ENCODE measurements at regions of chr14 and their contacts with region 1.

Region 1: GRCh38 chr14:88792572-88793258 is at the start of gene EML5:
- DNase-seq: peak; percentile 90
- ATAC-seq: peak; percentile 76
- H3K4me3 Mint-ChIP-seq: peak within 1 kb of the TSS; percentile 87
- H3K27ac Mint-ChIP-seq: peak within 1 kb of the TSS; percentile 87
- H3K4me1 Mint-ChIP-seq: peaks cover 26% of the 10 kb centered on the region
- H3K27me3 Mint-ChIP-seq: no peaks in the 10 kb centered on the region
- total RNA-seq, gene EML5: 8.1 TPM

Region 2: GRCh38 chr14:88599761-88600439 is 192.8 kb before region 1 on chr14:
- CTCF ChIA-PET with region 1: no interaction called
- POLR2A ChIA-PET with region 1: no interaction called
- intact Hi-C with region 1: loop called (anchors 5 kb)
- DNase-seq: peak; percentile 52
- ATAC-seq: peak; percentile 94
- H3K4me3 Mint-ChIP-seq: peak overlapping the region; percentile 38
- H3K27ac Mint-ChIP-seq: peak overlapping the region; percentile 78
- H3K4me1 Mint-ChIP-seq: peaks cover 26% of the 10 kb centered on the region
- H3K27me3 Mint-ChIP-seq: no peaks in the 10 kb centered on the region

Region 3: GRCh38 chr14:89540830-89541470 is 748.2 kb after region 1 on chr14:
- CTCF ChIA-PET with region 1: no interaction called
- POLR2A ChIA-PET with region 1: no interaction called
- intact Hi-C with region 1: no loop called
- DNase-seq: no peak
- ATAC-seq: no peak
- H3K4me3 Mint-ChIP-seq: no peak overlapping the region
- H3K27ac Mint-ChIP-seq: peak overlapping the region; percentile 0
- H3K4me1 Mint-ChIP-seq: peaks cover 57% of the 10 kb centered on the region
- H3K27me3 Mint-ChIP-seq: no peaks in the 10 kb centered on the region

Measured in activated CD4-positive, alpha-beta T cell treated with anti-CD3 and anti-CD28 coated beads for 36 hours (primary cell).